Caco-2 (cell line): ENCODE measurements at regions of chr12 and their contacts with region 1.

Region 1: DNA sequence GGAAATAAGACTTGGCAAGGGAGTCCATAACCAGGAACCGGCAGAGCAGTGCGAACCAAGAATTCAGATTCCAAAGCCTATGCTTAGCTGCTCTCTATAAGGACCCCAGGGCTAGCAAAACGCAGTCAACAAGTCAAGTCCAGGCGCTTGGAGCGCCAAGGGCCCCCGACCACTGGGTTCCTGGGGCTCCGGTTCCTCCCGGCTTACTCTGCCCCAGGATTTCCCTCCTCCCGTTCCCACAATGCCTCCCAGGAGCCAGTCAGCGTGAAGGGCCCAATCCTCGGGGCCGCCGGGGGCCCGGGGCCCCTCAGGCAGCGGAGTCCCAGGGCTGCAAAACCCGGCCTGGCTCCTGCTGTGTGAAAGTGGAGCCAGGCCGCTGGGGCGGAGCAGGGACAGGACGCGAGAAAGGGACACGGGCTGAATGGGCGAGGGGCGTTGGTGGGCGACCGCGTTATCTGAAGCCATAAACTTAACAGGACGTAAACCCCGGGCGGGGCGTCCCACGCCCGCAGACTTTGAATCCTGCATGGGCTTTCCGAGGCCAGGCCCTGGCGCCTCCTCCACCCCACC is 1.5 kb downstream of the KRT8 start:
- DNase-seq: peak in 1 of 2 experiments; percentile 61
- H3K4me3 ChIP-seq: peak overlapping the region; percentile 99
- H3K4me3 Mint-ChIP-seq: peak overlapping the region; percentile 95
- H3K27ac Mint-ChIP-seq: peak overlapping the region; percentile 98
- H3K4me1 ChIP-seq: peaks cover 72% of the 10 kb centered on the region
- H3K4me1 Mint-ChIP-seq: peaks cover 54% of the 10 kb centered on the region
- H3K27me3 ChIP-seq: no peaks in the 10 kb centered on the region
- H3K27me3 Mint-ChIP-seq: peaks cover 3% of the 10 kb centered on the region
- CTCF ChIP-seq: no peak

Region 2: GRCh38 chr12:52681526-52682380 is 221.6 kb before region 1 on chr12:
- CTCF ChIA-PET with region 1: no interaction called
- POLR2A ChIA-PET with region 1: no interaction called
- intact Hi-C with region 1: no loop called
- DNase-seq: no peak
- H3K4me3 ChIP-seq: no peak overlapping the region
- H3K4me3 Mint-ChIP-seq: no peak overlapping the region
- H3K27ac Mint-ChIP-seq: no peak overlapping the region
- H3K4me1 ChIP-seq: no peaks in the 10 kb centered on the region
- H3K4me1 Mint-ChIP-seq: no peaks in the 10 kb centered on the region
- H3K27me3 ChIP-seq: 0 out of 2 replicates have a peak, but pooled peaks cover 1% of the 10 kb centered on the region
- H3K27me3 Mint-ChIP-seq: peaks cover 19% of the 10 kb centered on the region
- CTCF ChIP-seq: no peak

Region 3: GRCh38 chr12:52873832-52874572 is 29.4 kb before region 1 on chr12:
- CTCF ChIA-PET with region 1: no interaction called
- POLR2A ChIA-PET with region 1: no interaction called
- intact Hi-C with region 1: no loop called
- DNase-seq: peak; percentile 70 to 71
- H3K4me3 ChIP-seq: peak overlapping the region; percentile 49
- H3K4me3 Mint-ChIP-seq: peak overlapping the region; percentile 80
- H3K27ac Mint-ChIP-seq: peak overlapping the region; percentile 76
- H3K4me1 ChIP-seq: peaks cover 43% of the 10 kb centered on the region
- H3K4me1 Mint-ChIP-seq: peaks cover 32% of the 10 kb centered on the region
- H3K27me3 ChIP-seq: no peaks in the 10 kb centered on the region
- H3K27me3 Mint-ChIP-seq: no peaks in the 10 kb centered on the region
- CTCF ChIP-seq: no peak

Region 4: DNA sequence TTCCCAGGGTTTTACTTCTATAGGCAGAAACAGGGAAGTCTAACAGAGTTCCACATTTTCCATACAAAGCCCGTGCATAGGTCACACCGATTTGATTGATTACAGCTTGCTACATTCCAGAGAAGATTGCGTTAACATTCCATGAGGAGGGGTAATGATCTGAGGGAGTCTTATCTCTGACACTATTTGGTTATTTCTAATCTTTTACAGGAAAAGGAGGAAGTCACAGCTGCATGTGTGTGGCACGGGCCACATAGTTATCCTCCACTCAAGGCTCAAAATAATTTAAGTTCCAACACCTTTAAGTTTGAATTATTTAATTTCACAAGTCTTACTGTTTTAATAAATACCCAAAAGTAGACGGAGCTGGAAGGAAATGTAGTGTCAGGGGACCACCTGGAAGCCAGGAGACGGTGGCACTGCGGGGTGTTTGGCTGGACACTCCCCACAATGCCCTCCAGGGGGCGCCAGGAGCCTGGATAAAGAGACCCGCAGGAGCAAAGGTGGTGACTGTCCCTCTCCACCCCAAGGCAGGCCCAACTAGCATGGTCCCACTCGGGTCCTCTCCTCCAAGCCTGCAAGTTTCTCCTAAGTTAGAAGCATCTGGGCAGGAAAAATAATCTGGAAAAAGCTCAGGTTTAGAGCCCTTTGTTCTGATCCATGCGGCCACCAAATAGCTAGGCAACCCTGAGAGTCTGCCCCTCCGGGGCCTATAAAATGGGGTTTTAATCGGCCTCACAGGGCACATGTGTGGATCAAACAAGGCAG is 18.7 kb before region 1 on chr12:
- CTCF ChIA-PET with region 1: interaction called, 13 read pairs
- POLR2A ChIA-PET with region 1: interaction called, 16 read pairs
- intact Hi-C with region 1: loop called (anchors 2 kb)
- DNase-seq: peak; percentile 89 to 92
- H3K4me3 ChIP-seq: peak overlapping the region; percentile 15; the same call in 1 of the 2 replicates
- H3K4me3 Mint-ChIP-seq: peak overlapping the region; percentile 68
- H3K27ac Mint-ChIP-seq: peak overlapping the region; percentile 95
- H3K4me1 ChIP-seq: peaks cover 55% of the 10 kb centered on the region
- H3K4me1 Mint-ChIP-seq: peaks cover 22% of the 10 kb centered on the region
- H3K27me3 ChIP-seq: no peaks in the 10 kb centered on the region
- H3K27me3 Mint-ChIP-seq: no peaks in the 10 kb centered on the region
- CTCF ChIP-seq: peak; percentile 93 to 97

Region 5: GRCh38 chr12:52942066-52942900 is 38.9 kb after region 1 on chr12:
- CTCF ChIA-PET with region 1: interaction called, 34 read pairs
- POLR2A ChIA-PET with region 1: interaction called, 114 read pairs
- intact Hi-C with region 1: loop called (anchors 1 kb)
- DNase-seq: peak; percentile 81 to 91
- H3K4me3 ChIP-seq: no peak overlapping the region
- H3K4me3 Mint-ChIP-seq: peak overlapping the region; percentile 27
- H3K27ac Mint-ChIP-seq: peak overlapping the region; percentile 99
- H3K4me1 ChIP-seq: peaks cover 58% of the 10 kb centered on the region
- H3K4me1 Mint-ChIP-seq: peaks cover 40% of the 10 kb centered on the region
- H3K27me3 ChIP-seq: no peaks in the 10 kb centered on the region
- H3K27me3 Mint-ChIP-seq: no peaks in the 10 kb centered on the region
- CTCF ChIP-seq: no peak

Region 6: GRCh38 chr12:52949413-52950331 is 46.3 kb after region 1 on chr12:
- CTCF ChIA-PET with region 1: interaction called, 34 read pairs
- POLR2A ChIA-PET with region 1: interaction called, 114 read pairs
- intact Hi-C with region 1: loop called (anchors 1 kb)
- DNase-seq: peak; percentile 77 to 83
- H3K4me3 ChIP-seq: peak overlapping the region; percentile 72
- H3K4me3 Mint-ChIP-seq: peak overlapping the region; percentile 89
- H3K27ac Mint-ChIP-seq: peak overlapping the region; percentile 99
- H3K4me1 ChIP-seq: peaks cover 50% of the 10 kb centered on the region
- H3K4me1 Mint-ChIP-seq: peaks cover 29% of the 10 kb centered on the region
- H3K27me3 ChIP-seq: no peaks in the 10 kb centered on the region
- H3K27me3 Mint-ChIP-seq: no peaks in the 10 kb centered on the region
- CTCF ChIP-seq: no peak

Region 7: GRCh38 chr12:52969828-52970569 is 66.6 kb after region 1 on chr12:
- CTCF ChIA-PET with region 1: interaction called, 11 read pairs
- POLR2A ChIA-PET with region 1: interaction called, 43 read pairs
- intact Hi-C with region 1: loop called (anchors 1 kb)
- DNase-seq: peak; percentile 93 to 96
- H3K4me3 ChIP-seq: no peak overlapping the region
- H3K4me3 Mint-ChIP-seq: peak overlapping the region; percentile 69
- H3K27ac Mint-ChIP-seq: peak overlapping the region; percentile 98
- H3K4me1 ChIP-seq: peaks cover 70% of the 10 kb centered on the region
- H3K4me1 Mint-ChIP-seq: peaks cover 55% of the 10 kb centered on the region
- H3K27me3 ChIP-seq: no peaks in the 10 kb centered on the region
- H3K27me3 Mint-ChIP-seq: no peaks in the 10 kb centered on the region
- CTCF ChIP-seq: no peak

Region 8: DNA sequence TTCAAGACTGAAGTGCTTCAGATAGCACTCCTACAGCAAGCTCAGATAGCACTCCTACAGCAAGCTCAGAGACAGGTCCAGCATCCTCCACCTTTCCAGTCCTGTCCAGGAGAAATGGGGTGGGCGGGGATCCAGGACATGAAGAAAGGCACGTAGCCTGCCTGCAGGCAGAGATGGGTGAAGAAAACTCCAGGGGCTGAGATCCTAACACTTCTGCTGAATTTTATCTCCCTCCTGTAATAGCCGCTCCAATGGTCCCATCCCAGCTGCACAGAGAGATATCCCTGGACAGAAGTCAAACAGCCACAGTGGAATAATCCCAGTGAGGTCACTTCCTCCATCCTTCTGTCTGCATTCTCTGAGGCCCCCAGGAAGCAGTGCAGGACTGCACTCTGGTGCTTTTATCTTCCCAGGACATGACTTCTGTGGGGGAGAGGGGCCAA is 71.8 kb after region 1 on chr12:
- CTCF ChIA-PET with region 1: interaction called, 31 read pairs
- POLR2A ChIA-PET with region 1: interaction called, 43 read pairs
- intact Hi-C with region 1: loop called (anchors 1 kb)
- DNase-seq: peak in 1 of 2 experiments; percentile 71
- H3K4me3 ChIP-seq: no peak overlapping the region
- H3K4me3 Mint-ChIP-seq: peak overlapping the region; percentile 20
- H3K27ac Mint-ChIP-seq: peak overlapping the region; percentile 83
- H3K4me1 ChIP-seq: peaks cover 80% of the 10 kb centered on the region
- H3K4me1 Mint-ChIP-seq: peaks cover 80% of the 10 kb centered on the region
- H3K27me3 ChIP-seq: no peaks in the 10 kb centered on the region
- H3K27me3 Mint-ChIP-seq: no peaks in the 10 kb centered on the region
- CTCF ChIP-seq: no peak

Region 9: GRCh38 chr12:53005986-53006809 is 102.8 kb after region 1 on chr12 and contains the start of gene EIF4B:
- CTCF ChIA-PET with region 1: no interaction called
- POLR2A ChIA-PET with region 1: interaction called, 22 read pairs
- intact Hi-C with region 1: no loop called
- DNase-seq: peak; percentile 99 to 100
- H3K4me3 ChIP-seq: peak within 1 kb of the TSS; percentile 98
- H3K4me3 Mint-ChIP-seq: peak within 1 kb of the TSS; percentile 97
- H3K27ac Mint-ChIP-seq: peak within 1 kb of the TSS; percentile 99
- H3K4me1 ChIP-seq: peaks cover 44% of the 10 kb centered on the region
- H3K4me1 Mint-ChIP-seq: peaks cover 24% of the 10 kb centered on the region
- H3K27me3 ChIP-seq: no peaks in the 10 kb centered on the region
- H3K27me3 Mint-ChIP-seq: no peaks in the 10 kb centered on the region
- CTCF ChIP-seq: no peak
- total RNA-seq, gene EIF4B: 445 and 452 TPM in 2 replicates